ENCODE measurements at regions of chr10 and their contacts with region 1.

Region 1: DNA sequence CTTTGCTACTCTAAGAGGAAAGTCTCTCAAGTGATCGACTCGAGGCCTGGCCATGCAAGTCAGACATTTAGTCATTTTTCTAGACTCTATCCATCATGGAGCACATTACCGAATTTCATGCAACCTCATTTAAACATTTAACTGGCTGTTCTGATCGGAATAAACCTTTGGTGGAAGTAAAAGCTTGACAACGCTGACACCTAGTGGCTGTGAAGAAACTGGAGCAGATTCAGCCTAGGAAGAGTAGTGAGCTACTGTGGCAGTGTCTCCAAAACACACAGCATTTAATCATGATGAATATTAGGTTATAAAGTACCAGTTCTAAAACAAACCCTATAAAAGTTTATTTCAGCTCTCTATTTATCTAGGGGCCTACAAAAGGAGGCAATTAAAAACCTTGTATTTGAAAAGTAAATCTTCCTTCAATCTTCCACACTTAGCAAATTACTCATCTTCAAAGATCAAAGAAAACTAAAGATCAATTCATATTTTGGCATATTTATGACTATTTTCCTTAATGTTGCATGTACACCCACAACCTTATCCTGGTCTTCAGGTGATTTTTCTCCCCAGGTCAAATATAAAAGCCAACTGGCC is 175.0 kb downstream of the CTNNA3 start:
- DNase-seq: peak; percentile 72
- ATAC-seq: peak; percentile 98
- H3K4me3 ChIP-seq: no peak overlapping the region
- H3K27ac ChIP-seq: no peak overlapping the region
- H3K4me1 ChIP-seq: no peaks in the 10 kb centered on the region
- H3K27me3 ChIP-seq: no peaks in the 10 kb centered on the region
- CTCF ChIP-seq: peak; percentile 84
- POLR2A ChIP-seq: no peak
- RAD21 ChIP-seq: peak; percentile 87

Region 2: GRCh38 chr10:66586073-66586472 is 934.9 kb before region 1 on chr10:
- CTCF ChIA-PET with region 1: no interaction called
- POLR2A ChIA-PET with region 1: no interaction called
- dilution Hi-C with region 1: no loop called
- in situ Hi-C with region 1: no loop called
- intact Hi-C with region 1: loop called (anchors 10 kb)
- DNase-seq: peak; percentile 35
- ATAC-seq: peak; percentile 72
- H3K4me3 ChIP-seq: no peak overlapping the region
- H3K27ac ChIP-seq: no peak overlapping the region
- H3K4me1 ChIP-seq: no peaks in the 10 kb centered on the region
- H3K27me3 ChIP-seq: no peaks in the 10 kb centered on the region
- CTCF ChIP-seq: peak; percentile 46
- POLR2A ChIP-seq: no peak
- RAD21 ChIP-seq: peak; percentile 55

Region 3: DNA sequence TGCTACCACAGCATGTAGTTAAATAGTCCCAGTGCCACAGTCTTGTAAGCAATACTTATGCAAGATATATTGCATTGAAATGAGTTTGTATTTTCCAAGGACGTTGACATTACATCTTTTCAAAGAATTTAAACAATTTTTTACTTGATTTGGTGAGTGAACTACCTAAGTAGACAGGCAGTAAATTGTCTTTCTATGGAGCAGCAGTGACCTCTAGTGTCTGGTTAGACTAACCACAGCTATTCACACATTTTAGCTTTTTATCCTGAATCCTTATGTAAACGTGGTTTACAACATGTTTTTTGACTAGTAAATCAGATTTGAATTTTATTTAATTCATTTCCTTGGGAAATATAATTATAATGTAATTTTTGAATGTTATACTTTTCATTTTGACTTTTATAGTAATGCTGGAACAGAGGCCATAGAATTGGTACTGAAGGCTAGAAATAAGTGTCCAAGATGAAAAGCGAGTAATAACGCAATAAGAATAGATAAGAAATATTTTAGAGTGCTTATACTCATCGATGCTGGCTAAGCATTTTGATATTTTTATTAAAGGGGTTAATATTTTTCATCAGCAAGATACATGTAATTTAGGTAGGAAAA is 589.6 kb before region 1 on chr10:
- CTCF ChIA-PET with region 1: interaction called, 3 read pairs
- POLR2A ChIA-PET with region 1: no interaction called
- dilution Hi-C with region 1: no loop called
- in situ Hi-C with region 1: loop called (anchors 25 kb)
- intact Hi-C with region 1: loop called (anchors 2 kb)
- DNase-seq: peak; percentile 77
- ATAC-seq: peak; percentile 92
- H3K4me3 ChIP-seq: no peak overlapping the region
- H3K27ac ChIP-seq: no peak overlapping the region
- H3K4me1 ChIP-seq: no peaks in the 10 kb centered on the region
- H3K27me3 ChIP-seq: peaks cover 13% of the 10 kb centered on the region
- CTCF ChIP-seq: peak; percentile 86
- POLR2A ChIP-seq: no peak
- RAD21 ChIP-seq: peak; percentile 91

Region 4: DNA sequence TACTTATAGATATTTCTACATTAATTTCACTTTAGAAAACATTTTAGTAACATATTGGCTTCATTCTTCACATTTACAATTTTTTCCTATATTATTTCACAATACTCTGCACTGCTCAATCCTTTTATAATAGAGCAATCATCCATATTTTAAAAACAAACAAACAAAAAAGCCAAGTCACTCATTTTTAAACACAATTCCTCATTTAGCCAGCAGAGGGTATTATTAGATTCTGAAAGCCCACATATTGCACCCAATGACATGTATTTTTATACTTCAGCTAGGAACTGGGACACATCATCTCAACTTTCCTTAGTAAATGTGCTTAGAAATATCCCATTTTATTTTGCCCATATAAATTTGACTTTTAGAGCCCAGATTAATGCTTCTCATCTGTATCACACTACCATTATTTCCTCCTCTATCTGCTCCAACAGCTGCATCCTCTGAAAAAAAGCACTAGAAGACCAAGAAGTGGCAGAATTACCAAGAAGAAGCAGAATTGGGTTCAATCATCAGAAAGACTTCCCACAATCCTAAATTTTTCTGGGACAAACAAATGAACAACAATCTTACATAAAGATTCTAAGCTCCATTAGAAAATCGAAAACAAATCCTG is 145.5 kb after region 1 on chr10:
- CTCF ChIA-PET with region 1: no interaction called
- POLR2A ChIA-PET with region 1: no interaction called
- dilution Hi-C with region 1: no loop called
- in situ Hi-C with region 1: no loop called
- intact Hi-C with region 1: loop called (anchors 10 kb)
- DNase-seq: peak; percentile 30
- ATAC-seq: no peak
- H3K4me3 ChIP-seq: no peak overlapping the region
- H3K27ac ChIP-seq: no peak overlapping the region
- H3K4me1 ChIP-seq: no peaks in the 10 kb centered on the region
- H3K27me3 ChIP-seq: no peaks in the 10 kb centered on the region
- CTCF ChIP-seq: peak; percentile 44
- POLR2A ChIP-seq: no peak
- RAD21 ChIP-seq: peak; percentile 39